Panc1 (cell line): ENCODE measurements at regions of chr5 and their contacts with region 1.

Region 1: GRCh38 chr5:139787568-139788293 is 7.9 kb upstream of the PSD2 start:
- DNase-seq: peak; percentile 43
- ATAC-seq: peak; percentile 90
- H3K4me3 ChIP-seq: peak overlapping the region; percentile 56 to 92
- H3K27ac ChIP-seq: peak overlapping the region; percentile 49; the same call in 1 of the 2 replicates
- H3K4me1 ChIP-seq: no peaks in the 10 kb centered on the region
- H3K27me3 ChIP-seq: no peaks in the 10 kb centered on the region
- CTCF ChIP-seq: peak; percentile 95

Region 2: DNA sequence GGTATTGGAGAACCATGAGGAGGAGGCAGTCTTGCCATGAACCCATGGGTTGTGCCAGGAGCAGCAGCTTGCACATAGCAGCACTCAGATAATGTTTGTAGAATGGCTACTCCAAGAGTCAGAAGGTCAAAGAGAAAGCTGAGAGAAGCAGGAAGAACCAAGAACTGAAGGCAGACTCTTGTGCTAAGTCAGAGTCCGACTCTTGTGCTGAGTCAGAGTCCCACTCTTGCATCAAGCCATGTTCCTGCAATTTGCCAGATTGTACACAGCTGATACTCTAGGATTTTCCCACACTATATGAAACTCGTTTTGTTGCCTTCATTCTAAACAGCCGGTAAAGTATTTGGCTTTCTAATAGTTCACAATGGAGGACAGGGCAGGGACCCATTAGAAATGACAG is 1186.3 kb before region 1 on chr5:
- CTCF ChIA-PET with region 1: no interaction called
- POLR2A ChIA-PET with region 1: no interaction called
- in situ Hi-C with region 1: no loop called
- intact Hi-C with region 1: no loop called
- DNase-seq: peak; percentile 22
- ATAC-seq: 0 out of 2 replicates have a peak, but pooled peaks have one; percentile 45
- H3K4me3 ChIP-seq: no peak overlapping the region
- H3K27ac ChIP-seq: no peak overlapping the region
- H3K4me1 ChIP-seq: no peaks in the 10 kb centered on the region
- H3K27me3 ChIP-seq: no peaks in the 10 kb centered on the region
- CTCF ChIP-seq: no peak

Region 3: DNA sequence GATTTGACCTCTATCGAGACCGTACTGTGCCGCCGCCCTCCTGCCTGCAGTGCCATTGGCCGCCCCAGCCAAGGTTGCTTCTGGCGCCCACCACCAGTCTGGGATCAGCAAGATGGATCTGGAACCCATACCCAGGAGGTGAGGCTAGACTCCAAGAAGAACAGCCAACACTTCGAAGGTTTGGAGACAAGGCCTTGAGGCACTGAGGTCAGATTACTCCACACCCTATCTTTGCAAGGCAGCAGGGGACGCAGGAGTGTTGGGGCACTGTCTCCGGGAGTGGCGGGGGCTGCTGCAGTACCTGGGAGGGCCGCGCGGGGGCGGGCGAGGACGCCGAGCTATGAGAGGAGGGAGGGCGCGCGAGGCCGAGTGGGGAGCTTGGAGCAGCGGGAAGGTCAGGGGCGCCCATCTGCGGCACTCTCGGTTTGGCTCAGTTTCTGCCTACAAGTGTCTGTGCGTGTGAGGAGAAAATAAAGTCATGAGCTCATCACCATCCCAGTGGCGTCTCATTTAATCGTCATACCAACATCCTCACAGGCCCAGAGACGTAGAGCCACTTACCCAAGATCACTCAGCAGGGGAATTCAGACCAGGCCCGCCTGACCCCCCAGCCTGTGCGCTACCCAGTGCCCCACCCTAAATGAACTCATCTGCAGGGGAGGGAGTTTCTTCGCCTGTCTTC is 12.6 kb before region 1 on chr5:
- CTCF ChIA-PET with region 1: interaction called, 25 read pairs
- POLR2A ChIA-PET with region 1: no interaction called
- in situ Hi-C with region 1: no loop called
- intact Hi-C with region 1: no loop called
- DNase-seq: no peak
- ATAC-seq: peak; percentile 93
- H3K4me3 ChIP-seq: no peak overlapping the region
- H3K27ac ChIP-seq: no peak overlapping the region
- H3K4me1 ChIP-seq: no peaks in the 10 kb centered on the region
- H3K27me3 ChIP-seq: 0 out of 2 replicates have a peak, but pooled peaks cover 2% of the 10 kb centered on the region
- CTCF ChIP-seq: peak; percentile 98

Region 4: DNA sequence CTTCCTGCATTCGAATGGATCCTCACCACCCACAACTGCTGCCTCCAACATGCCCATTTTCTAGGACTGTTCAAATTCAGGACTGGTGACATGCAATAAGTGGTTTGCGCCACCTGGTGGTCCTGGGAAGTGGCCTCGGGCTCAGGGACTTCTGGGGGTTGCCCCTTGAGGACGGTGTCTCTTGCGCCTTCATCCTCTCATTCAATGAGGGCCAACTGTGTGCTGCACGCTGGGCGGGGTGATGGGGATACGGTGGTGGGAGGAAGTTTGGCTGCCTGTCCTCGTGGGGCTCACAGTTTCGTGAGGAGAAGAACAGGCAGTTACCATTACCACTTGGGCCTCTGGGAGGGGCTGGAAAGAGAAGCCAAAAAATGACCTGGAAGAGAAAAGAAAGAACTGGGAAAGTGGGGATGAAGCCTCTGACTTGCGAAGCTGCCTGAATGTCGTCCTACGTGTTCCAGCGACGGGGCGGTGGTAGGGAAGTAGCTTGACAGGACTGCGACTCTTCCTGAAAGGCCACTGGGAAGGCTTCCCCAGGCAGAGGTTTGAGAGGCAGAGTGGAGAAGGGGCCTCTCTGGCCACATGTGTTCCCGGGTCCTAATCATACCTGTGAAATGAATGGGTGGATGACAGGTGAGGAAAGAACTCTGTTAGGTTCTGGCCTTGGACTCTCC is 56.9 kb after region 1 on chr5:
- CTCF ChIA-PET with region 1: interaction called, 15 read pairs
- POLR2A ChIA-PET with region 1: no interaction called
- in situ Hi-C with region 1: no loop called
- intact Hi-C with region 1: loop called (anchors 1 kb)
- DNase-seq: peak; percentile 39
- ATAC-seq: peak; percentile 89
- H3K4me3 ChIP-seq: no peak overlapping the region
- H3K27ac ChIP-seq: no peak overlapping the region
- H3K4me1 ChIP-seq: no peaks in the 10 kb centered on the region
- H3K27me3 ChIP-seq: no peaks in the 10 kb centered on the region
- CTCF ChIP-seq: peak; percentile 94

Region 5: DNA sequence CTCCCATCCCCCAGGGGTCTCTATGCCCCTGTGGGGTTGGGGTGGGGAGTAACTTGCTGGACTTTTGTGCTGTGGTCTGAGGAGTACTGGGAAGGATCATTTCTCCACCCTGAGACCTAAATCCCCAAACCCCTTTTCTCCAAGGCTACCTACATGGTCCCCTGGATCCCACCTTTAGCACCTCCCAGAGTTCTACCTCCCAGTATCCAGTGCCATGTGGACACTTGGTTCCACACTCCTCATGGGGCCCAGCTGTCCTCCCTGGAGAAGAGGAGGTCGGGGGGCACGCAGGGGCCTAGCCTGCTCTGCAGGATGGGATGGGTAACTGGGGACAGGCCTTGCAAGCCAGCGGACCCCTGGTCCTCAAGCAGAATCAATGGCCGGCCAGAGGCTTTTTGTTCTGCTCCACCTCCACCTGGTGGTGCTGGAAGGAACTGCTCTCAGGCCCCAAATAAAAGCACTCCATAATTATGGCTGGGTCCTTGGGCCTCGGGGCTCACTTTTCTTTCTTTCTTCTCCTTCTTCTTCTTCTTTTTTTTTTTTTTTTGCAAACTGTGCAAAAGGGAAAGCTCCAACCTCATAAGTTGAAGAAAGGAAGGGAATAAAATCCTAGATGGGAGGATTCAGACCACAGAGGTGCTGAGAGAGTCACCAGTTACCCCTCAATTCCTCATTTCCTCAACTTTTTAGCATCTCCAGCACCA is 76.3 kb after region 1 on chr5:
- CTCF ChIA-PET with region 1: interaction called, 9 read pairs
- POLR2A ChIA-PET with region 1: no interaction called
- in situ Hi-C with region 1: no loop called
- intact Hi-C with region 1: loop called (anchors 5 kb)
- DNase-seq: peak; percentile 38
- ATAC-seq: peak; percentile 71
- H3K4me3 ChIP-seq: no peak overlapping the region
- H3K27ac ChIP-seq: no peak overlapping the region
- H3K4me1 ChIP-seq: no peaks in the 10 kb centered on the region
- H3K27me3 ChIP-seq: no peaks in the 10 kb centered on the region
- CTCF ChIP-seq: peak; percentile 88

Region 6: DNA sequence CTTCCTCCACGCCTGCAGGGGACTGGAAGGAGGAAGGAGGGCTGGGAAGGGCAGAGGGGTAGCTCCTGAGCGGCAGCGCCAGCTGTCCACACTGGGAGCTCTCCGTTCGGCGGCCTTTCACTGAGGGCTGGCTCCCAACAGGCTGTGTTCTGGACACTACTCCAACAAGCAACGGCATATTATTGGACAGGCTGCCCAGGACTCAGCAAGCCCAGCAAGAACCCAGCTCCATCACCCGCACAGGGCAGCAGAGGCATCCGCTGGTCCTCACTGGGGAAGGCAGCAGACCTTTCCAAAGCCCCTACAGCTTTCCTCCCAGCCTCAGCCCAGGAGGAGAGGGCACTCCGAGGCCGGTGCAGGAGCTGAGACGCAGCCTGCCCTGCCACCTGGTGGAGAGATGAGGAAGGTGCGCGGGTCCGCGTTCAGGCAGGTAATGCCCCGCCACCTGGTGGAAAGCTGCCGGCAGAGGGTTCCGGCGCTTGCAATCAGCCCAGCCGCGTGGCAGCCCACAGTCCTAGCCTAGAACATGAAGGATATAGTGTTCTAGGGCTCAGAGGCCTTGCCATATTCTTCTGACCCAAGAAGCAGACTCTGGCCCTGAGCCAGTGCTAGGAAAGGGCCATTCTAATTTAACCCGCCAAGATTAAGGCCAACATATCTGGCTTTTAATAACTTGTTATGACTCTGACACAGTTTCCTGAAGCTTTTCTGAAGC is 181.0 kb after region 1 on chr5:
- CTCF ChIA-PET with region 1: interaction called, 42 read pairs
- POLR2A ChIA-PET with region 1: interaction called, 6 read pairs
- in situ Hi-C with region 1: no loop called
- intact Hi-C with region 1: loop called (anchors 2 kb)
- DNase-seq: peak; percentile 72
- ATAC-seq: peak; percentile 97
- H3K4me3 ChIP-seq: no peak overlapping the region
- H3K27ac ChIP-seq: no peak overlapping the region
- H3K4me1 ChIP-seq: peaks cover 11% of the 10 kb centered on the region
- H3K27me3 ChIP-seq: no peaks in the 10 kb centered on the region
- CTCF ChIP-seq: peak; percentile 99

Region 7: DNA sequence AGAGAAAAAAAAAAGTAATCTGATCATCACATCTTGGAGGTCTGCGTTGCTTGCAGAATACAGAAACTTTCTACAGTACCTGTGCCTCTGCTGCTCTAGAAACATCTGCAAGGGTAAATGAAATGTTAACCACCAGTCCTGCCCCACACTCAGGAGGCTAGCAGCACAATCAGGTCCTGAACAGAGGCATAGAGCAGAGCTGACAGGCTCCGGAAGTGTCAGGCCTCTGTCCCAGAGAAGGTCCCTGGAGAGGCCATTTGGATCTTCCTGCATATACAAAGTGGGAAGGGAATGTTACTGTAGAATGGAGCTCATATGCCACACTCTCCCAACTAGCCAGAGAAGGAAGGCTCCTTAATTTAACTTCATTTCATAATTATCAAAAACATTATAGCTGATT is 248.2 kb after region 1 on chr5:
- CTCF ChIA-PET with region 1: no interaction called
- POLR2A ChIA-PET with region 1: no interaction called
- in situ Hi-C with region 1: no loop called
- intact Hi-C with region 1: no loop called
- DNase-seq: no peak
- ATAC-seq: no peak; the same call in 1 of the 2 replicates
- H3K4me3 ChIP-seq: no peak overlapping the region
- H3K27ac ChIP-seq: peak overlapping the region; percentile 98
- H3K4me1 ChIP-seq: peaks cover 36% of the 10 kb centered on the region
- H3K27me3 ChIP-seq: no peaks in the 10 kb centered on the region
- CTCF ChIP-seq: no peak